Mammary epithelial cell (primary cell): ENCODE measurements at regions of chr13 and their contacts with region 1.

Region 1: GRCh38 chr13:52968074-52968700 is 60.4 kb upstream of the OLFM4 start:
- DNase-seq: peak; percentile 69
- H3K4me3 ChIP-seq: no peak overlapping the region
- H3K27ac ChIP-seq: no peak overlapping the region
- H3K4me1 ChIP-seq: no peaks in the 10 kb centered on the region
- H3K27me3 ChIP-seq: peaks cover 3% of the 10 kb centered on the region
- CTCF ChIP-seq: peak; percentile 99 to 100

Region 2: DNA sequence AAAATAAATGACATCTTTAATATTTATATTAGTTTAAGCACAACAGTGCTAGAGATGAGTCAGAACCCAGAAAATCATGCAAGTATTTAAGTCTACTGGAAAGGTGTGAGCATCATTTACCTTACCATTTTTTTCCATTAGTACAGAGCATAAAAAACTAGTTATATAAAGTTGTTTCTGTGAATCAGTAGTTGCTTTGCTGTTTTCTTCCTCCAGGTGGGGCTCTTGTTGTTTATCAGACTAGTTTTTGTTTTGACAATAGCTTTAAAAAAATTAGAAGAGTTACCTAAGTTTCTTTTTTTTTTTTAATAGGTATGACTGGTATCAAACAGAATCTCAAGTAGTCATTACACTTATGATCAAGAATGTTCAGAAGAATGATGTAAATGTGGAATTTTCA is 302.9 kb before region 1 on chr13:
- CTCF ChIA-PET with region 1: interaction called, 9 read pairs
- dilution Hi-C with region 1: no loop called
- in situ Hi-C with region 1: no loop called
- intact Hi-C with region 1: loop called (anchors 2 kb)
- DNase-seq: peak; percentile 37
- H3K4me3 ChIP-seq: no peak overlapping the region
- H3K27ac ChIP-seq: no peak overlapping the region
- H3K4me1 ChIP-seq: no peaks in the 10 kb centered on the region
- H3K27me3 ChIP-seq: no peaks in the 10 kb centered on the region
- CTCF ChIP-seq: peak; percentile 38 to 53

Region 3: DNA sequence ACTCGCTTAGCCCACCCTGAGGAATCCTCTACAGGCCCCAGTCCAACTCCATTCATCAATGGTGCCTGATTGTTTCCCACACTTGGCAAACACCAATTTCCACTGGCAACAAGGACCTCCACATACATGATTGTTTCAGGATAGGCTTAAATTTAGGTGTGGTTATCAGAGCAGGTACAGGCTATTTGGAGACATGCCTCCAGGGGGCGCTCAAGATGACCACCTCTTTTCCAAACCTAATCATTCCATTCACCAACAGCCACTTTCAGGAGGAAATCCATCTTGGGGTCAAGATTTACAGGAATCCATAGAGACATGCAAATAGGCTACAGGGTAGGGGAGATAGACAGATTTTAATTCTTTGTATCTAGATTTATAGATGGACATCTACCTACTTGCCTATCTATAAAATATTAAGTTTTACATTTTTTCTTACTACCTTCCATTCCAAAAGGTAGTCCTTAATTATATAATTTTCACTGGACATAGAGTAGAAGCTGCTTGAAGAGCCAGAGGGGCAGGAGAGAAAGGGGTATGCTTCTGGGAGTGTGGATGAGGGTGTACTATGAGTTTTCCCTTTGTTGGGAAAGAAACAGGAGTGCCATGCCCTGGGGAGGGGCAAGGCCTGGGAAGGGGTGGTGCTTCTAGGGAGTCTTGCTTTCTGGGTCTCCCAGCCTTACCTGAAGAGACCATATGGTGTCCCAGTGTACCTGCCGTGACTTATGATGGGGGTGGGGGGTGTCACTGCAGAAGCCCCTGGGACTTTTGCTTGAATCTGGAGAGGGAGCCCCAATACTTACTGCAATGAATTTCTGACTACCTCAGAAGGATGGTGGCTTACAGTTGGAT is 105.6 kb before region 1 on chr13:
- CTCF ChIA-PET with region 1: interaction called, 7 read pairs
- dilution Hi-C with region 1: no loop called
- in situ Hi-C with region 1: no loop called
- intact Hi-C with region 1: loop called (anchors 1 kb)
- DNase-seq: no peak
- H3K4me3 ChIP-seq: no peak overlapping the region
- H3K27ac ChIP-seq: no peak overlapping the region
- H3K4me1 ChIP-seq: no peaks in the 10 kb centered on the region
- H3K27me3 ChIP-seq: no peaks in the 10 kb centered on the region
- CTCF ChIP-seq: peak; percentile 72 to 78

Region 4: GRCh38 chr13:52896827-52897659 is 71.1 kb before region 1 on chr13:
- CTCF ChIA-PET with region 1: interaction called, 31 read pairs
- dilution Hi-C with region 1: no loop called
- in situ Hi-C with region 1: no loop called
- intact Hi-C with region 1: loop called (anchors 1 kb)
- DNase-seq: no peak
- H3K4me3 ChIP-seq: no peak overlapping the region
- H3K27ac ChIP-seq: no peak overlapping the region
- H3K4me1 ChIP-seq: no peaks in the 10 kb centered on the region
- H3K27me3 ChIP-seq: no peaks in the 10 kb centered on the region
- CTCF ChIP-seq: peak; percentile 64 to 71

Region 5: DNA sequence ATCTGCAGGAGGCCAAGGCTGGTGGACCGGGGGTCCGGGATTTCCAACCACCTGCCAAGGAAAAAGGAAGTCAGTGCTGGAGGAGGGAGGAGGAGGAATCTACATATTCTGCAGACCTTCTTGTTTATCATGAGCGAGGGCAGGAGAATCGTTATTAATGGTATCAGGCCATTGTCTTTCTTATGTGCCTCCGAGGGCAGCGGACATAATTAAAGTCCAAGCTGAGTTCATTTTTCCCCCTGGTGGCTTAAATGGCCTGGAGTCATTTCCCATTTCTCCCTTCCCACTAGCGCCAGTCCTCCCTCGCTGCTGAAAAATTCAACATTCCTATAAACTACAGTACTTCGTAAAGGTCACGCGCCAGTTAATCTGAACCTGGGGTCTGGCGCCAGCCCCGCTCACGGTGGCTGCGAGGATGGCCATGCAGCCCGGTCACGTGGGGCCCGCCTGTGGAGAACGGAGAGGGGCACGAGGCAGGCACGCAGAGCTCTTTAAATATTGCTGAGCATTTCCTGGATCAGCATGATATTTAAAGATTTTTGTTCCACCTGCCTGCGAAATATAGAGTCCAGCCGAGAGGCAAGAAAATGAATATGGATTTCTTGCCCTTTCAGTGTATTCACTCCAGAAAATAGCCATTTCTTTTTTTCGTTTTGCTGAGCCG is 34.5 kb before region 1 on chr13:
- CTCF ChIA-PET with region 1: no interaction called
- dilution Hi-C with region 1: no loop called
- in situ Hi-C with region 1: no loop called
- intact Hi-C with region 1: no loop called
- DNase-seq: no peak
- H3K4me3 ChIP-seq: no peak overlapping the region
- H3K27ac ChIP-seq: no peak overlapping the region
- H3K4me1 ChIP-seq: no peaks in the 10 kb centered on the region
- H3K27me3 ChIP-seq: no peaks in the 10 kb centered on the region
- CTCF ChIP-seq: no peak

Region 6: GRCh38 chr13:53151336-53152056 is 183.3 kb after region 1 on chr13:
- CTCF ChIA-PET with region 1: interaction called, 5 read pairs
- dilution Hi-C with region 1: no loop called
- in situ Hi-C with region 1: no loop called
- intact Hi-C with region 1: loop called (anchors 5 kb)
- DNase-seq: no peak
- H3K4me3 ChIP-seq: no peak overlapping the region
- H3K27ac ChIP-seq: no peak overlapping the region
- H3K4me1 ChIP-seq: no peaks in the 10 kb centered on the region
- H3K27me3 ChIP-seq: no peaks in the 10 kb centered on the region
- CTCF ChIP-seq: peak; percentile 68 to 77